Ascending aorta (tissue), 2 donors: ENCODE measurements at regions of chr3 and their contacts with region 1.

Region 1: DNA sequence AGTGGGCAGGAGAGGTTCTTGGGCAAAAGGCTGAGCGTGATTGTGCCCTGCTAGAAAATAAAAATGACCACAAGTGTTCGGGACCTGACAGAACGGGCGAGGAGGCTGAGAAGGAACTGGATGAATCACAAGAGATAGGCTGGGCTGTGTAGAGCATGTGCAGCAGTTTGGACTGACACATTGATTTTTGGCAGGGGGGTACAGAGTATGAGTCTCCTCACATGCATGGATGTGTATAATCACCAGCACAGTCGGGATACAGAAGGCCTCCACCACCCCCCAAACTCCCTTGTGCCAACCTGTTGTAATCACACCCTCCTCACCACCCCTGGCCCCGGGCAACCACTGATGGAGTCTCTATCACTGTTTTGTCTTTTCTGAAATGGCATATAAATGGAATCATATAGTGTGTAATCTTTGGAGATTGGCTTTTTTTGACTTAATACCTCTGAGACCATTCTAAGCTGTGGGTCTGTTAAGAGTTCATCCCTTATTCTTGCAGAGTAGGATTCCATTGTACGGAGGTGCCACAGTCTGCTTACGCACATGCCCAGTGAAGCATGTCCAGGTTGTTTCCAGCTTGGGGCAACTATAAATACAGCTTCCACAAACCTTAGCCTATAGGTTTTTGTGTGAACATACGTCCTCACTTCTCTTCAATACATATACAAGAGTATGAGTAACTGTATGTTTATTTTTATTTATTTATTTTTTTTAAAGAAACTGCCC is 438.8 kb downstream of the FOXP1 start:
- DNase-seq: no peak
- H3K4me3 ChIP-seq: peak overlapping the region in 1 of 2 donors; percentile 9
- H3K27ac ChIP-seq: peak overlapping the region; percentile 10 to 66
- H3K4me1 ChIP-seq: peaks cover 0 to 20% of the 10 kb centered on the region in 2 donors
- H3K27me3 ChIP-seq: no peaks in the 10 kb centered on the region
- CTCF ChIP-seq: no peak

Region 2: DNA sequence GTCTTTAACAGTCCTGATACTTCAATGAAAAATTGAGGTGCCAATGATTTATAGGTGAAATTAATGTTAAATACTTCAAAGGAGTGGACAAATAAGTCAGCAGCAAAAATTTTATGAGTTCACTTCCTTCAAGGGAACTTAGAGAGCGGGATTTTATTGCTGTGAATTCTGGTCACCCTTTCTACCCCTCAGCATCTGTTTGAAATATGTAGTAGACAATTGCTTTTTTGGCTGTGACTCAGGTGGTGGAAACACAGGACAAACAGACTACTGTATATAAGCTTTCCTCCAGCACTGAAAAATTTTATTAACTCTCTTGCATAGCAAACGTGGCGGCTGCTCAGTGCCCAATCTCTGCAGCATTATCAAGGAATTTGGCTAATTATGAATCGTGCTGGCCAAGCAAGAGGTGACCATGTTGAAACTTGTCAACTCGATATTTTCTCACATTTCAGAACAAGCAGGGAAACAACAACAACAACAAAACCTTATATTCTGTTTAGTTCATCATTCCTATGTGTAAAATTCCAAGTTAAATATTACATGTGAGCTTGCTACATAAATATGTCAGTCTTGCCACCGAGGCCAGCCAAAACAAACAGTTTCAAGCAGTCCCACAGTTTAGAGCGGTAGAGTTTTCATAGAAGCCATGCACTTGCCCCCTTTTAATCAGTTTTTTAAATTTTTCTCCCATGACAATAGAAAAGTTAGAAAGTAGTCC is 18.7 kb after region 1 on chr3:
- intact Hi-C with region 1: loop called (anchors 2 kb)
- DNase-seq: no peak
- H3K4me3 ChIP-seq: peak overlapping the region in 1 of 2 donors; percentile 49
- H3K27ac ChIP-seq: peak overlapping the region; percentile 68 to 87
- H3K4me1 ChIP-seq: peaks cover 7 to 25% of the 10 kb centered on the region in 2 donors
- H3K27me3 ChIP-seq: no peaks in the 10 kb centered on the region
- CTCF ChIP-seq: no peak